ENCODE measurements at regions of chr4 and their contacts with region 1.

Region 1: DNA sequence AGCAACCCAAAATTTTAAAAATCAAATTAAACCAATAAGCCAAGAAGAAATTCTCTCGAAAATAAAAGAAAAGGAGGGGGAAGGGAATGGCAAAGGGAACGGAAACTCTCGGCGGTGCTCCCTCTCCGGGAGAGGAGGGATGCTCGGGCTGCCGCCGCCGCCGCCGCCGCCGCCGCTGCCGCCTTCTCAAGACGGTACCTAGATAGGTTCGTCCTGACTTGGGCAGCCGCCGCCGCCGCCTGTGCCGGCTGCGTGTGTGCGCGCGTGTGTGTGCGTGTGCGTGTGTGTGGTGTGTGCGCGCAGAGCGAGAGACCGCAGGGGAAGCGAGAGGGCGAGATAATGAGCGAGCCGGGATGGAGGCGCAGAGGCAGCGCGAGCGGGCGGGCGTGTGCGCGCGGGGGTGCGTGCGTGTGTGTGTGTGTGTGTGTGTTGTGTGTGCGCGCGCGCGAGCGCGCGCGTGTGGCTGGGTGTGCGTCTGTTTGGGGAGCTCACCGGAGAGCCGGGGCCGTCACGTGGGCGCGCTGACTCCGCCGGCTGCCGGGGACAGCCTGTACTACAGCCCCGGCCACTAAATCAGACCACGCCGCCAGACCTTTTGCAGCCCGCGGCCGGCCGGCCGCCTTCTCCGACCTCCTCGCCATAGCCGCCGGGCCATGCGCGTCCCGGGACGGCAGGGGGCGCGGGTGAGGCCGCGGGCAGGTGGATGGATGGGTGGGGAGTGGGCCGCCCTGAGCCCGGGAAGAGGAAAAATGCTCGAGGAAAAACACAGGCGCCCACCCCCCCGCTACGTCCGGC is 111.6 kb downstream of the DHX15 start:
- DNase-seq: peak; percentile 83
- H3K4me3 ChIP-seq: peak overlapping the region; percentile 43 to 50
- H3K27ac ChIP-seq: peak overlapping the region; percentile 66 to 71
- H3K4me1 ChIP-seq: peaks cover 7% of the 10 kb centered on the region
- H3K27me3 ChIP-seq: no peaks in the 10 kb centered on the region
- CTCF ChIP-seq: peak; percentile 19 to 75 (median 52)
- POLR2A ChIP-seq: no peak

Region 2: DNA sequence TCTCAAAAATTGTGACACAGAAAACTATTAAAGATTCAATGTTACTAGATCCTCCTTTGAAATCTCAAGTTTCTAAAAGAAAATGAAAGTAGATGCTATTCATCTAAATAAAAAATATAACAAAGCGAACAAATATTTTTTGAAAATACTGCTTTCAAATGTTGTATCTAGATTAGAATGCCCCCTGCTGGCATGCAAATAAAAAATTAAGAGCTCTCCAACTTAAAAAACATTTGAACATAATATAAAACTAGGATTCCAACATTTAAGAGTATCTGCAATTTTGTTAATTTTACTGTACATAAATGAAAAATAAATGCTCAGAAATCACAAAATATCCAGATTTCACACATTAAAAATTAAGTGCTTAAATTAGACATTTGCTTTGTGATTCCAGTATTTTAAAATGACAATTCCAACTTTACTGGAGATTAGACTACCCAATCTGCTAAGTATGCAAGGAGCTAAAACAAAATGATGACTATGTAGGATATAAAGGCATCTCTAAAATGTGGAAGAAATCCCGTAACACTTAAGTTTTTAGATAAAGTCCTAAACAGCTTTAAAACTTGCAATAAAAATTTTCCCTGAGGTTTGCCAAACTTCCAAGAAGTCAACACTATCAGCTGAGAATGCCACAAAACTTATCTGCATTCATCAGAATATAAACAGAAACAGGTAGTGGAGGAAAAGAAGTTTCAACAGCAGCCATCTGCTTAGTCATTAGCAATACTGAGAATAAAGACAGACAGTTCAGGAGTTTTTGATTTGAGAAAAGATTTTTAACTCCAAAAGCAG is 79.0 kb after region 1 on chr4:
- intact Hi-C with region 1: loop called (anchors 10 kb)
- DNase-seq: no peak
- H3K4me3 ChIP-seq: no peak overlapping the region
- H3K27ac ChIP-seq: no peak overlapping the region
- H3K4me1 ChIP-seq: no peaks in the 10 kb centered on the region
- H3K27me3 ChIP-seq: no peaks in the 10 kb centered on the region
- CTCF ChIP-seq: peak in 1 of 4 experiments; percentile 33
- POLR2A ChIP-seq: no peak